AG04450 (cell line): ENCODE measurements at regions of chr7 and their contacts with region 1.

Region 1: GRCh38 chr7:74388880-74389415 is 64.8 kb upstream of the GTF2IRD1 start:
- DNase-seq: no peak
- H3K4me3 ChIP-seq: no peak overlapping the region
- H3K27ac ChIP-seq: no peak overlapping the region
- H3K27me3 ChIP-seq: no peaks in the 10 kb centered on the region
- CTCF ChIP-seq: no peak

Region 2: GRCh38 chr7:74334030-74334429 is 54.9 kb before region 1 on chr7:
- CTCF ChIA-PET with region 1: no interaction called
- POLR2A ChIA-PET with region 1: interaction called, 11 read pairs
- DNase-seq: peak; percentile 42
- H3K4me3 ChIP-seq: no peak overlapping the region
- H3K27ac ChIP-seq: peak overlapping the region; percentile 73
- H3K27me3 ChIP-seq: no peaks in the 10 kb centered on the region
- CTCF ChIP-seq: no peak